H1 (cell line): ENCODE measurements at regions of chr1 and their contacts with region 1.

Region 1: GRCh38 chr1:183234660-183235476 is 48.8 kb downstream of the LAMC2 start:
- DNase-seq: peak; percentile 41 to 66
- H3K4me3 ChIP-seq: peak overlapping the region in 3 of 4 experiments; percentile 9 to 44 (median 19); a peak in 5 of 8 replicates
- H3K27ac ChIP-seq: peak overlapping the region; percentile 11; the same call in 1 of the 2 replicates
- H3K4me1 ChIP-seq: peaks cover 7 to 12% (median 10%) of the 10 kb centered on the region in 4 experiments; a peak in 6 of 7 replicates
- H3K27me3 ChIP-seq: no peaks in the 10 kb centered on the region
- CTCF ChIP-seq: peak in 2 of 3 experiments; percentile 59 to 60; a peak in 3 of 4 replicates
- EP300 ChIP-seq: no peak
- POLR2A ChIP-seq: peak; percentile 21 to 29; a peak in 1 of 3 replicates
- RAD21 ChIP-seq: peak; percentile 19 to 32; a peak in 3 of 4 replicates

Region 2: GRCh38 chr1:183058851-183059502 is 175.9 kb before region 1 on chr1:
- CTCF ChIA-PET with region 1: no interaction called
- POLR2A ChIA-PET with region 1: no interaction called
- DNase-seq: no peak
- H3K4me3 ChIP-seq: no peak overlapping the region
- H3K27ac ChIP-seq: no peak overlapping the region
- H3K4me1 ChIP-seq: no peaks in the 10 kb centered on the region; a peak in 2 of 7 replicates
- H3K27me3 ChIP-seq: no peaks in the 10 kb centered on the region
- CTCF ChIP-seq: no peak
- EP300 ChIP-seq: no peak
- POLR2A ChIP-seq: no peak
- RAD21 ChIP-seq: no peak

Region 3: GRCh38 chr1:183137782-183138181 is 97.1 kb before region 1 on chr1:
- CTCF ChIA-PET with region 1: interaction called, 10 read pairs
- POLR2A ChIA-PET with region 1: no interaction called
- DNase-seq: no peak
- H3K4me3 ChIP-seq: no peak overlapping the region
- H3K27ac ChIP-seq: no peak overlapping the region
- H3K4me1 ChIP-seq: no peaks in the 10 kb centered on the region
- H3K27me3 ChIP-seq: no peaks in the 10 kb centered on the region
- CTCF ChIP-seq: no peak
- EP300 ChIP-seq: no peak
- POLR2A ChIP-seq: no peak
- RAD21 ChIP-seq: no peak

Region 4: DNA sequence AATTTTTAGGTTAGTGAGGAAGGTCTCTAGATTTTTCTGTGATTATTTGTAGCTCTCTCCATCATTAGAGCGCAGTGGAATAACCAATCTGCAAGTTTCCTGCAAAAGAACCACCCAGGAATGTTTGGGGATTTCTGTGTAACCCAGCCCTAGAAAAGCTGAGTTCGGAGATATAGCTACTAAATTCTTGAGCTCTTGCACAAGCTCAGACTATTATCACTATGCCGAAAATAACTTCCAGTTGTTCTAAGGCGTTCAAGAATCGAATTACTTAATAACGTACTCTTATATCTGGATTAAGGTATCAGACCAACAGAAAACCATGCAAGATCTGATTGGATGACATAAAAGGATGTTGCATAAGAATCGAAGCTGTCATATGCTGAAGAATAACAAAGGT is 56.4 kb before region 1 on chr1:
- CTCF ChIA-PET with region 1: no interaction called
- POLR2A ChIA-PET with region 1: no interaction called
- DNase-seq: no peak
- H3K4me3 ChIP-seq: no peak overlapping the region
- H3K27ac ChIP-seq: no peak overlapping the region
- H3K4me1 ChIP-seq: peaks cover 0 to 2% (median 0%) of the 10 kb centered on the region in 4 experiments; a peak in 1 of 7 replicates
- H3K27me3 ChIP-seq: no peaks in the 10 kb centered on the region
- CTCF ChIP-seq: no peak
- EP300 ChIP-seq: no peak
- POLR2A ChIP-seq: no peak
- RAD21 ChIP-seq: no peak

Region 5: DNA sequence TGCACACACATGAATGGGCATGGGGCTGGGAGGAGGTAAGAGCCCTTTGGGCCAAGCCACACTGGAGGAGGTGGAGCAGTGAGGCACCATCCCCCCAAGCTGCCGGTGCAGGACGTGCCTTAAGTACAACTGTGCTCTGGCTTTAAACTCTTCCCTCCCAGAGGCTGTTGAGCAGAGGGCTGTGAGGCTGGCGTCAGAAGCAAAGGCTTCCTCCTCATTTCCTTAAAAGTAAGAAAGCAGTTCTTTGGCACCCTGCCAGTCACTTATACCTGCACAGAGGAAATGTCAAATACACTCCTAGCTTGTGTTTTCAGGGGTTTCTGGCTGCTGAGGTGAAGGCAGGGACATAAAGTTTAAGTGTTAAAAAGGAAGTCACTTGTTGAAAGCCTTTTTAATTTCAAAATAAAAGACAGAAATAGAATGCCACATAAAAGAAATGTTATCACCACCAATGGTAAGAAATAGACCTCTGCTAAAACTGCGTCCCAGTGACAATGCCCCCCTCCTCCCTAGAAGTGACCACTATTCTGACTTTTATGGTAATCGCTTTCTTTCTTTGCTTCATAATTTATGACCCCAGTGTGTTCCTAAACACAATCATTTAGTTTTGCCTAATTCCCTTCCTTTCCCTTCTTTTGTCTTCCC is 15.8 kb before region 1 on chr1:
- CTCF ChIA-PET with region 1: interaction called, 86 read pairs
- POLR2A ChIA-PET with region 1: interaction called, 3 read pairs
- DNase-seq: no peak
- H3K4me3 ChIP-seq: no peak overlapping the region
- H3K27ac ChIP-seq: no peak overlapping the region
- H3K4me1 ChIP-seq: peaks cover 0 to 6% (median 3%) of the 10 kb centered on the region in 4 experiments; a peak in 2 of 7 replicates
- H3K27me3 ChIP-seq: no peaks in the 10 kb centered on the region; a peak in 1 of 7 replicates
- CTCF ChIP-seq: no peak
- EP300 ChIP-seq: no peak
- POLR2A ChIP-seq: no peak
- RAD21 ChIP-seq: no peak

Region 6: DNA sequence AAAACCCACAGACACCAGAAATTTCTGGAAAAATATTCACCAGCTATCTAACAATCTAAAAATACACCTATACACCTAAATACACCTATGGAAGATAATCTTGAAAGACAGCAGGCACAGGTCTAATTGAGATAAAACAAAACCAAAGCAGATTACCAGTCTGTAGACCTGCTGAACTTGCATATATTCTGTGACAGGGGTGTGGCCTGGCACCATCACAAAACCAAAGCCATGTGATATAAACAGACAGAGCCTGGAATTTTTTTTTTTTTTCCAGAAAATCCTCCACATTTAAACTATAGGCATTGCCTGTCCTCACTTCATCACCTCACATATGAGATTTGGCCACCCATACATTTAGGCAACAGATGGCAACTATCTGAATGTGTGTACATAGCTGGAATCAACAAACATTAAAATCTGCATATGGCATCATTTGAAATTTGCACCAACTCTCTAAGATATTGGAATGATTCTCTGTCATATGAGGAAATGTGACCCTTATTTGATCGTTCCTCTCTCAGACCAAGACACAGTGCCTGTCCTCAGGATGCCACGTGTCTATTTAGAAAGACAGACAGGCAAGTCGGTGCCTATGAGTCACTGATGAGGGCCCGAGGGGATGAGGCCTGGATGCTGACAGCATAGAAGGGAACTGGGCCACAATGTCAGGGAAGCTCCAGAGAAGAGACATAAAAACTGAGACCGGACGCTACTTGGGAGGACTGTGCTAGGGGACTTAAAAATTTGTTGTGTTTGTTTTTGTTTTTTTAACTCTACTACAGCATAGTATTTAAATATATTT is 150.7 kb after region 1 on chr1:
- CTCF ChIA-PET with region 1: no interaction called
- POLR2A ChIA-PET with region 1: no interaction called
- DNase-seq: no peak
- H3K4me3 ChIP-seq: no peak overlapping the region
- H3K27ac ChIP-seq: no peak overlapping the region
- H3K4me1 ChIP-seq: peaks cover 0 to 3% (median under 1%) of the 10 kb centered on the region in 4 experiments; a peak in 3 of 7 replicates
- H3K27me3 ChIP-seq: no peaks in the 10 kb centered on the region
- CTCF ChIP-seq: no peak
- EP300 ChIP-seq: no peak
- POLR2A ChIP-seq: no peak
- RAD21 ChIP-seq: no peak